ENCODE measurements at regions of chr16 and their contacts with region 1.

Region 1: GRCh38 chr16:71412270-71413160 is 29.3 kb downstream of the TLE7 start:
- DNase-seq: peak; percentile 30 to 80 (median 69)
- ATAC-seq: peak; percentile 65
- H3K4me3 ChIP-seq: no peak overlapping the region
- H3K4me3 Mint-ChIP-seq: no peak overlapping the region
- H3K27ac ChIP-seq: no peak overlapping the region
- H3K27ac Mint-ChIP-seq: no peak overlapping the region
- H3K4me1 ChIP-seq: peaks cover 6% of the 10 kb centered on the region
- H3K4me1 Mint-ChIP-seq: peaks cover 11% of the 10 kb centered on the region
- H3K27me3 ChIP-seq: no peaks in the 10 kb centered on the region
- H3K27me3 Mint-ChIP-seq: peaks cover 14% of the 10 kb centered on the region
- CTCF ChIP-seq: peak; percentile 82

Region 2: DNA sequence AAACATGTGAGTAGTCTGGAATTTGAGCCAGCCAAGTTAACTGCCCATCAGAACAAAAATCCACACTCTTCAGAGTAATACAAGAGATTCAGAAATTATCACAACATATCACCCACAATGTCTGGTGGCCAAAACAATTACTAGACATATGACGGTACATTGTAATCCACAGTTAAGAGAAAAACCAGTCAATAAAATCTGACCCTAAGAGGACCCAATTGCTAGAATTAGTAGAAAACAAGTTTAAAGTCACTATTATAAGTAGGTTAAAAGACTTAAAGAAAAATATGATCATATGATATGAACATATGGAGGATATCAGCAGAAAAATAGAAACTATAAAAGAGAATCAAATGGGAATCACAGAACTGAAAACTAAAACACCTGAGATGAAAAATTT is 139.1 kb before region 1 on chr16:
- CTCF ChIA-PET with region 1: no interaction called
- POLR2A ChIA-PET with region 1: no interaction called
- intact Hi-C with region 1: no loop called
- DNase-seq: no peak
- ATAC-seq: no peak
- H3K4me3 ChIP-seq: no peak overlapping the region
- H3K4me3 Mint-ChIP-seq: no peak overlapping the region
- H3K27ac ChIP-seq: no peak overlapping the region
- H3K27ac Mint-ChIP-seq: no peak overlapping the region
- H3K4me1 ChIP-seq: no peaks in the 10 kb centered on the region
- H3K4me1 Mint-ChIP-seq: no peaks in the 10 kb centered on the region
- H3K27me3 ChIP-seq: no peaks in the 10 kb centered on the region
- H3K27me3 Mint-ChIP-seq: peaks cover 3% of the 10 kb centered on the region
- CTCF ChIP-seq: no peak

Region 3: GRCh38 chr16:71373073-71373472 is 39.4 kb before region 1 on chr16:
- CTCF ChIA-PET with region 1: no interaction called
- POLR2A ChIA-PET with region 1: no interaction called
- intact Hi-C with region 1: no loop called
- DNase-seq: no peak
- ATAC-seq: no peak
- H3K4me3 ChIP-seq: no peak overlapping the region
- H3K4me3 Mint-ChIP-seq: no peak overlapping the region
- H3K27ac ChIP-seq: no peak overlapping the region
- H3K27ac Mint-ChIP-seq: no peak overlapping the region
- H3K4me1 ChIP-seq: no peaks in the 10 kb centered on the region
- H3K4me1 Mint-ChIP-seq: no peaks in the 10 kb centered on the region
- H3K27me3 ChIP-seq: peaks cover 0 to 2% of the 10 kb centered on the region in 2 experiments
- H3K27me3 Mint-ChIP-seq: peaks cover 30% of the 10 kb centered on the region
- CTCF ChIP-seq: no peak

Region 4: GRCh38 chr16:71426072-71426879 is 13.8 kb after region 1 on chr16:
- CTCF ChIA-PET with region 1: interaction called, 41 read pairs
- POLR2A ChIA-PET with region 1: no interaction called
- intact Hi-C with region 1: no loop called
- DNase-seq: peak in 4 of 9 experiments; percentile 25 to 85 (median 62)
- ATAC-seq: peak; percentile 91
- H3K4me3 ChIP-seq: peak overlapping the region in 1 of 2 experiments; percentile 43
- H3K4me3 Mint-ChIP-seq: peak overlapping the region; percentile 81
- H3K27ac ChIP-seq: peak overlapping the region in 1 of 2 experiments; percentile 22
- H3K27ac Mint-ChIP-seq: peak overlapping the region; percentile 88
- H3K4me1 ChIP-seq: no peaks in the 10 kb centered on the region
- H3K4me1 Mint-ChIP-seq: peaks cover 18% of the 10 kb centered on the region
- H3K27me3 ChIP-seq: peaks cover 0 to 6% of the 10 kb centered on the region in 2 experiments
- H3K27me3 Mint-ChIP-seq: peaks cover 25% of the 10 kb centered on the region
- CTCF ChIP-seq: no peak

Region 5: DNA sequence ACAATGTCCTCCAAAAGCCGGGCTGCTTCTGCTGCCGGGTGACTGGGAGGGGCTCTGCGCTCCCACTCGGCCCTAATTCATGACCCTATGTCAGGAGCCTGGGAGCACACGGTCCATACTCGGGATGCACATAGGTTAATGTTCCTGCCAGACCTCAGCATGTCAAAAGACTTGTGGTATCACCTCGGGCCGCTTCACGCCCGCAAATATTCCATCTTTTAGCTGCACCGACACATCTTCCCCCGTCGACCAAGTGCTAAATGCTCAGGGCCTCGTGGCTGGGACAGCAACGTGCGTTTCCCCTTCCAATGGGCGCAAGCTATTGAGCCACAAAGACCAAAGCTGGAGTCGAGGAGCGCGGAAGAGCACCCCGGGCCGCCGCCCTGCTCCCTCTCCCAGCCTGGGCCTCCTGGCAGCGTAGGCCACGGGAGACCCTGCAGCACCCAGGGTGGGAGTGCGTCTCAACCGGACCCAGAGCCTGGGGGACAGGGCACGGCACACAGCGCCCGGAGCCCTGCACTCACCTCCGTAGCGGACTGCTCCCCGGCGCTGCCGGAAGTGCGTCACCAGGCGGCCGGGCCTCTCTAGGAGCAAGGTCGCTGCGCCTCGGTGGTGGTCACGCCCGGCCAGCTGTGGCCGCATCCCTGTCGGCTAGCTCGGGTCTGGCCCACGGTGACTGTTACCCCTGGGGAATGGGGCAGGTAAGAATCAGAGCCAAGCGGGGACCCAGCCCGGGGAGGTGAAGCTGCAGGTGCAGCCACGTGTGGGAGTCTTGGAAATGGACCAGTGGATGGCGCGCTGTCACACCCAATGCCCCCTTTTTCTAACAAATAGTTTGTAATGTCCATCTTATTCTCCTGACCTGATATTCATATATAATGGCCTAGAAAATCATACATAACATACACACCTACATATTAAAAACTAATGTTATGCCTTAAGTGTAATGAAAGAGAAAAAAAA is 49.5 kb after region 1 on chr16 and contains the start of gene ZNF23:
- CTCF ChIA-PET with region 1: interaction called, 12 read pairs
- POLR2A ChIA-PET with region 1: no interaction called
- intact Hi-C with region 1: no loop called
- DNase-seq: peak; percentile 55 to 88 (median 79)
- ATAC-seq: peak; percentile 95
- H3K4me3 ChIP-seq: peak within 1 kb of the TSS; percentile 96 to 100
- H3K4me3 Mint-ChIP-seq: peak within 1 kb of the TSS; percentile 96
- H3K27ac ChIP-seq: peak within 1 kb of the TSS; percentile 92 to 93
- H3K27ac Mint-ChIP-seq: peak within 1 kb of the TSS; percentile 96
- H3K4me1 ChIP-seq: peaks cover 19% of the 10 kb centered on the region
- H3K4me1 Mint-ChIP-seq: peaks cover 32% of the 10 kb centered on the region
- H3K27me3 ChIP-seq: no peaks in the 10 kb centered on the region
- H3K27me3 Mint-ChIP-seq: no peaks in the 10 kb centered on the region
- CTCF ChIP-seq: peak; percentile 29
- total RNA-seq, gene ZNF23: 8.0 to 8.5 TPM

Region 6: GRCh38 chr16:71826533-71827017 is 414.1 kb after region 1 on chr16:
- CTCF ChIA-PET with region 1: no interaction called
- POLR2A ChIA-PET with region 1: no interaction called
- intact Hi-C with region 1: no loop called
- DNase-seq: no peak
- ATAC-seq: no peak
- H3K4me3 ChIP-seq: no peak overlapping the region
- H3K4me3 Mint-ChIP-seq: no peak overlapping the region
- H3K27ac ChIP-seq: no peak overlapping the region
- H3K27ac Mint-ChIP-seq: peak overlapping the region; percentile 2
- H3K4me1 ChIP-seq: no peaks in the 10 kb centered on the region
- H3K4me1 Mint-ChIP-seq: no peaks in the 10 kb centered on the region
- H3K27me3 ChIP-seq: no peaks in the 10 kb centered on the region
- H3K27me3 Mint-ChIP-seq: no peaks in the 10 kb centered on the region
- CTCF ChIP-seq: no peak